B cell (primary cell): ENCODE measurements at regions of chr2 and their contacts with region 1.

Region 1: DNA sequence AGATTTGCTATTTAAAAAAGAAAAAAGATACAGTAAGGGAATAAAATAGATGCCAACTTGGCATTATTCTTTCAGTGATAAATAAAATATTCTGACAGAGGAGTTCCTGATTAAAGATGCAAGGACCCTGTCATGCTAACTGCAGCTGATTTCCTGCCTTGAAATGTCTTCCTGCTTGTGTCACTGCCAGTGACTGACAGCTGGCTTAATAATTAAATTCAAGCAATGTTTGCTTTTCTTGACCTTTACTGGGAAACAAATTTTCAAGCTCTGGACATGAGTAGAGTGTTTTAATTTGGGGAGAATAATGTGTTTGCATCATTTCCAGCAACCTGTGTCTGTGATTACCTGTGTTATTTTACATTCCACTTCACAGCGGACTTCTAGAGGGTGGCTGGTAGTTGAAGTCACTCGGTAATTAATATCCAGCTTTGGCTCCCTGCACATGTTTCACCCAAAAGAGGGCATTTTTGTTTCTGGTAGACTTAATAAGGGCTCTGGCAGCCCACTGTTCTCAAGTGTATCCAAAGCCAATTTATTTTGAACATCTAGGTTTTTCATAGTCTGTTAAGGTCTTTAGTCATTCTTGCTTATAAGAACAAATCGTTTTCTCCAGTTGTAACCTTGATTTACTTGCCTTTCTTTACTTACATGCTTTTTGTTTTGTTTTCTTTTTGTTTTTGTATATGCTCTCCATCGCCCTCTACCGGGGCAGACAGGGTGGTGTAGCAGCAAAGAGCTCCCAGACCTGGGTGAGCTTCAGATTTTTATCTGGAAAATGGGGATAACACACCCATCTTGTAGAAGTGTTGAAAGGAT is 48.5 kb upstream of the PROKR1 start:
- DNase-seq: peak; percentile 64
- ATAC-seq: no peak
- H3K4me3 ChIP-seq: no peak overlapping the region
- H3K4me3 Mint-ChIP-seq: peak overlapping the region; percentile 9
- H3K27ac ChIP-seq: no peak overlapping the region
- H3K27ac Mint-ChIP-seq: no peak overlapping the region
- H3K4me1 ChIP-seq: peaks cover 5 to 9% of the 10 kb centered on the region in 2 donors
- H3K4me1 Mint-ChIP-seq: peaks cover 14% of the 10 kb centered on the region
- H3K27me3 ChIP-seq: no peaks in the 10 kb centered on the region
- H3K27me3 Mint-ChIP-seq: no peaks in the 10 kb centered on the region
- CTCF ChIP-seq: peak; percentile 96

Region 2: GRCh38 chr2:68487773-68488355 is 107.0 kb before region 1 on chr2:
- CTCF ChIA-PET with region 1: interaction called, 12 read pairs
- POLR2A ChIA-PET with region 1: no interaction called
- intact Hi-C with region 1: no loop called
- DNase-seq: peak; percentile 50
- ATAC-seq: no peak
- H3K4me3 ChIP-seq: no peak overlapping the region
- H3K4me3 Mint-ChIP-seq: no peak overlapping the region
- H3K27ac ChIP-seq: no peak overlapping the region
- H3K27ac Mint-ChIP-seq: no peak overlapping the region
- H3K4me1 ChIP-seq: peaks cover 0 to 2% of the 10 kb centered on the region in 2 donors
- H3K4me1 Mint-ChIP-seq: peaks cover 4% of the 10 kb centered on the region
- H3K27me3 ChIP-seq: no peaks in the 10 kb centered on the region
- H3K27me3 Mint-ChIP-seq: no peaks in the 10 kb centered on the region
- CTCF ChIP-seq: peak; percentile 76

Region 3: DNA sequence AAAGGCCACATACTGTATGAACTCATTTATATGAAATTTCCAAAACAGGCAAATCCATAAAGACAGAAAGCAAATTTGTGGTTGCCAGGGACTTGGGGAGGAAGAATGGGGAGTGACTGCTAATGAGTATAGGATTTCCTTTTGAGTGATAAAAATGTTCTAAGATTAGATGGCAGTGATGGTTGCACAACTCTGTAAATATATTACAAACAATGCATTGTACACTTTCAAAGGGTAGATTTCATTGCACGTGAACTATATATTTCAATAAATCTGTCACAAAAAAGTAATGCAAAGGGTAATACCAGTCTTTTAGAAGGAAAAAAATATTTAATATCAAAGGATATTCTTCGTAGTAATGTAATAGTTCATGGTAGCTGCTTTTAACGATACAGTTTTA is 15.2 kb before region 1 on chr2:
- CTCF ChIA-PET with region 1: interaction called, 12 read pairs
- POLR2A ChIA-PET with region 1: no interaction called
- intact Hi-C with region 1: no loop called
- DNase-seq: no peak
- ATAC-seq: no peak
- H3K4me3 ChIP-seq: no peak overlapping the region
- H3K4me3 Mint-ChIP-seq: no peak overlapping the region
- H3K27ac ChIP-seq: no peak overlapping the region
- H3K27ac Mint-ChIP-seq: no peak overlapping the region
- H3K4me1 ChIP-seq: no peaks in the 10 kb centered on the region
- H3K4me1 Mint-ChIP-seq: no peaks in the 10 kb centered on the region
- H3K27me3 ChIP-seq: no peaks in the 10 kb centered on the region
- H3K27me3 Mint-ChIP-seq: no peaks in the 10 kb centered on the region
- CTCF ChIP-seq: no peak

Region 4: DNA sequence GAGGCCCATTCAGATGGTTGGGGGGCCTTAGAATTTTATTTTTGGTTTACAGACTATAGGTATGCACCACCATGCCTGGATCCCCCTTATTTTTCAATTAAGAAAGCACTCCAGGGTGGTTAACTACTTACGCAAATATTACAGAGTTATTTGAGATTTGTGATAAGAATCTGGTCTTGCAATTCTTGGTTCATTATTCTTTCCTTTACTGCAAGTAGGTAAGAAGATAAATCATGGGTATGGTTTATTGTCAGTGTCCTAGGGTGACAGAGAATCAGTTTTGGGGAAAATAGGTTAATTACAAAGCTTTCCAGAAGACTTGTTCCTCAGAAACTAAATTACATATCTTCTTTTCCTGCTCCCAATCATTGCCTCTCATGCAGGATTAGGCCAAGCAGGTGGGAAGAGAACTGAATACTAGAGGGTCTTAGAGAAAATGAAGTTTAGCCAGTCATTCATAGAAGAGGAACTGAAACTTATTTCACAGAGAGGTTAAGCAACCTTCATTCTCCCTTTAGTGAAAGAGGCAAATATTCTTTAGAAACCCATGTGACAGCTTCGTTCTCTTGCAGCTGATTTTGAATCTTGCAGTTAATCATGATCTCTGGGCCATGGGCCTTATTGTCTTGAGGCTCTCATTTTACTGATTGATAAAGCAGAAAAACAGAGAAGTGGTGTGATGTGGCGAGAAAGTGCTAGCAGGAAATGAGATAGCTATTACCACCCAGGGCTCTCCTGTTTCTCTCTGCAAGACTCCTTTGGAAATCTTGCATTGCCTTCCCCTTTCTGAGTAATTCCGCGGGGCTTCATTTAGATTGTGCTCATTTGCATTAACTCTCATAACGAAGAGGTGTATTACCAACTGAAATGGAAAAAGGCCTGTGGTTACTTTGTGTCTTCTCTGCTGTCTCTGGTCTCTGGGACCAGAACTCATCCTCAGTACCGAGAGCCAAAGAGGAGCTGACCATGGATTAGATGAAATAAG is 95.0 kb after region 1 on chr2:
- CTCF ChIA-PET with region 1: interaction called, 10 read pairs
- POLR2A ChIA-PET with region 1: no interaction called
- intact Hi-C with region 1: no loop called
- DNase-seq: peak; percentile 80
- ATAC-seq: peak; percentile 81
- H3K4me3 ChIP-seq: peak overlapping the region in 4 of 5 experiments; percentile 8 to 50 (median 22)
- H3K4me3 Mint-ChIP-seq: peak overlapping the region; percentile 65
- H3K27ac ChIP-seq: peak overlapping the region; percentile 39 to 62
- H3K27ac Mint-ChIP-seq: peak overlapping the region; percentile 84
- H3K4me1 ChIP-seq: peaks cover 35 to 36% of the 10 kb centered on the region in 2 donors
- H3K4me1 Mint-ChIP-seq: peaks cover 40% of the 10 kb centered on the region
- H3K27me3 ChIP-seq: no peaks in the 10 kb centered on the region
- H3K27me3 Mint-ChIP-seq: no peaks in the 10 kb centered on the region
- CTCF ChIP-seq: no peak